B cell (primary cell): ENCODE measurements at regions of chr14 and their contacts with region 1.

Region 1: GRCh38 chr14:102805371-102806246 is 28.4 kb downstream of the TRAF3 start:
- DNase-seq: peak; percentile 61
- ATAC-seq: peak; percentile 55
- H3K4me3 ChIP-seq: peak overlapping the region in 3 of 5 experiments; percentile 0 to 49 (median 13)
- H3K4me3 Mint-ChIP-seq: peak overlapping the region; percentile 89
- H3K27ac ChIP-seq: peak overlapping the region; percentile 82 to 85
- H3K27ac Mint-ChIP-seq: peak overlapping the region; percentile 97
- H3K4me1 ChIP-seq: peaks cover 70 to 77% of the 10 kb centered on the region in 2 donors
- H3K4me1 Mint-ChIP-seq: peaks cover 75% of the 10 kb centered on the region
- H3K27me3 ChIP-seq: no peaks in the 10 kb centered on the region
- H3K27me3 Mint-ChIP-seq: no peaks in the 10 kb centered on the region
- CTCF ChIP-seq: no peak

Region 2: GRCh38 chr14:102768223-102769048 is 37.2 kb before region 1 on chr14:
- CTCF ChIA-PET with region 1: interaction called, 4 read pairs
- POLR2A ChIA-PET with region 1: no interaction called
- intact Hi-C with region 1: loop called (anchors 2 kb)
- DNase-seq: peak; percentile 94
- ATAC-seq: peak; percentile 95
- H3K4me3 ChIP-seq: peak overlapping the region in 1 of 5 experiments; percentile 10
- H3K4me3 Mint-ChIP-seq: peak overlapping the region; percentile 48
- H3K27ac ChIP-seq: peak overlapping the region; percentile 98
- H3K27ac Mint-ChIP-seq: peak overlapping the region; percentile 97
- H3K4me1 ChIP-seq: peaks cover 47 to 71% of the 10 kb centered on the region in 2 donors
- H3K4me1 Mint-ChIP-seq: peaks cover 68% of the 10 kb centered on the region
- H3K27me3 ChIP-seq: no peaks in the 10 kb centered on the region
- H3K27me3 Mint-ChIP-seq: no peaks in the 10 kb centered on the region
- CTCF ChIP-seq: no peak

Region 3: DNA sequence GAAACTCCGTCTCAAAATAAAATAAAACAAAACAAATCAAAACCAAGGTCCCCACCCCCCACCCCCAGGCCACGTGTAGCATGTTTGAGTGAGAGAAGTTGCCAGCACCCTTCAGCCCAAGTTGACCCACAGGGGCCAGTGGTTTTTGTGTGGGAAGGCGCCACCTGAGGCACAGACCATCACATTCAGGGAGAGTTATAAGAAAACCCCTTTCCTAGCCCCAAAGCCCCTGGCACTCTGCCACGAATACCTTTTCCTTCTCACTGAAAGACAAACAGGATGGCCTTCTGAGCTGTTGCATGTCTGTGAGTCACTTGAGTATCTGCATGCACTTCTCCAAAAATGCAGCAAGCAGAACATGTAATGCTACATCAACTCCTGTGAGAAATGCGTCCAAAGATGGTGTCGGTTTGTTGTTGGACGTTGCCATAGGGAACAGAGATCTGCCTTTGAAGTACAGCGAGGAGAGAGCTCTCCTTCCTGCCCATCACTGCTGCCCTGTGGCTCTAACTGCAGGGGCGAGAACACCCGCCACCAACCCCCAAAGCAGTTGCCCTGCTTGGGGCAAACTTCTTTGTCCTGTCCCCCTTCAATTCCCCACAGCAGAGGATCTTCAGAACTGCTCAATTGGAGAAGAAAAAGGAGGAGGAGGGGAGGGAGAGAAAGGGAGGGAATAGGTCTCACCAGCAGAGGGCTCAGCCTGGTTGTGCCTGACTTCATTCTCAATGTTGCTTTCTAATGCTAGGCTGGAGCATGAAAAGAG is 31.0 kb before region 1 on chr14:
- CTCF ChIA-PET with region 1: interaction called, 8 read pairs
- POLR2A ChIA-PET with region 1: interaction called, 4 read pairs
- intact Hi-C with region 1: loop called (anchors 1 kb)
- DNase-seq: peak; percentile 90
- ATAC-seq: peak; percentile 19
- H3K4me3 ChIP-seq: no peak overlapping the region
- H3K4me3 Mint-ChIP-seq: peak overlapping the region; percentile 81
- H3K27ac ChIP-seq: peak overlapping the region; percentile 95 to 97
- H3K27ac Mint-ChIP-seq: peak overlapping the region; percentile 98
- H3K4me1 ChIP-seq: peaks cover 54 to 67% of the 10 kb centered on the region in 2 donors
- H3K4me1 Mint-ChIP-seq: peaks cover 59% of the 10 kb centered on the region
- H3K27me3 ChIP-seq: no peaks in the 10 kb centered on the region
- H3K27me3 Mint-ChIP-seq: no peaks in the 10 kb centered on the region
- CTCF ChIP-seq: peak; percentile 75

Region 4: DNA sequence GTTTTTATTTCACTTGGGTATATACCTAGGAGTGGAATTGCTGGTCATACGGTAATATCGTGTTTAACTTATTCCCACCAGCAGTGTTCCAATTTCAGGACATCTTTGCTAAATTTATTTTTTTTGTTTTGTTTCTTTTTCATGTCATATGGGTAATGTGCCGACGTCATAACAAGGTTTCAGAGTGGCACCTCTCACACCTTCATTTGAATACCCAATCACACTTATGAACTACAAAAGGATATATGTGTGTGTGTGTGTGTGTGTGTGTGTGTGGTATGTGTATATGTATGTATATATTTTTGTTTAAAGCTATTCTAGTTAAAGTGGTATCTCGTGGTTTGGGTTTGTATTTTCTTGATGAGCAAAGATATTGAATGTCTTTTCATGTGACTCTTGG is 16.3 kb before region 1 on chr14:
- CTCF ChIA-PET with region 1: no interaction called
- POLR2A ChIA-PET with region 1: interaction called, 10 read pairs
- intact Hi-C with region 1: loop called (anchors 2 kb)
- DNase-seq: no peak
- ATAC-seq: no peak
- H3K4me3 ChIP-seq: no peak overlapping the region
- H3K4me3 Mint-ChIP-seq: no peak overlapping the region
- H3K27ac ChIP-seq: peak overlapping the region in 1 of 2 donors; percentile 51
- H3K27ac Mint-ChIP-seq: no peak overlapping the region
- H3K4me1 ChIP-seq: peaks cover 50 to 61% of the 10 kb centered on the region in 2 donors
- H3K4me1 Mint-ChIP-seq: peaks cover 76% of the 10 kb centered on the region
- H3K27me3 ChIP-seq: no peaks in the 10 kb centered on the region
- H3K27me3 Mint-ChIP-seq: no peaks in the 10 kb centered on the region
- CTCF ChIP-seq: no peak

Region 5: DNA sequence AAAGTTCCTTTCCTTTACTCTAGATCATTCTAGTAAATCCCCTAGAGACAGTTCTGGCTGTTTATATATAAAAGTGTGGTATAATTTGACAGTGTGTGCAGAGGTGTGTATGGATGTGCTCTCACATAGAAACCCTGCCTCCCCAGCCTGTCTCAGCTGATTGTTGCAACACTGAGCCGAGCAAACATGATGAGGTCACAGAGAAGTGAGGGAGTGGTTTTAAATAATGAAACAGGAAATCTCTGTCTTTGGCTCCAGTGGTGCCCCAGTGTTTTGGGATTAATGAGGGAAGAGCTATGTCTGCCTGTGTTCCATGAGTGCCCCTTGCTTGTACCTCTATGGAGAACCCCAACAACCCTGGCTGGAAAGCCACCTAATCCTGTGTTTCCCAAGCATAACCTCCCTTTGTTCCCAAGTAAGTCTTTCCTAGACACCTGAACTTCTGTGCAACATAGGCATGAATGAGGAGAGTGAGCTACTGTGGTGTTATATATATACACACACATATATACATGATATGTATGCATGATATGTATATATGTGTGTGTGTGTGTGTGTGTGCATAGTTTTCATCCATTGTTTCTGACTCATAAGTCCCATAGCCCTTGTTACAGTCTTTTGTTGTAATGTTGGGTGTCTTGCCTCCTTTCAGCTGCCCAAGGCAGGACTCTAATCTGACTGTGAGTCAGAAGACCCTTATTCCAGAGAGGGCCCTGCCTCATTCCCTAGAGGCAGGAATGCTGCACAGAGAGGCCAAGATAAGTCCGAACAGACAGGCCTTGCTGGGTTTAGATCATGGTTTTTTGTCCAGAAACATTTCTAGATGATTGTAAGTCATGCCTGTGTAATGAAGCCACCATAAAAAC is 10.3 kb before region 1 on chr14:
- CTCF ChIA-PET with region 1: interaction called, 3 read pairs
- POLR2A ChIA-PET with region 1: interaction called, 4 read pairs
- intact Hi-C with region 1: loop called (anchors 2 kb)
- DNase-seq: peak; percentile 64
- ATAC-seq: peak; percentile 73
- H3K4me3 ChIP-seq: no peak overlapping the region
- H3K4me3 Mint-ChIP-seq: peak overlapping the region; percentile 56
- H3K27ac ChIP-seq: peak overlapping the region; percentile 48 to 50
- H3K27ac Mint-ChIP-seq: peak overlapping the region; percentile 86
- H3K4me1 ChIP-seq: peaks cover 53 to 54% of the 10 kb centered on the region in 2 donors
- H3K4me1 Mint-ChIP-seq: peaks cover 79% of the 10 kb centered on the region
- H3K27me3 ChIP-seq: no peaks in the 10 kb centered on the region
- H3K27me3 Mint-ChIP-seq: no peaks in the 10 kb centered on the region
- CTCF ChIP-seq: no peak

Region 6: GRCh38 chr14:102900631-102901571 is 95.3 kb after region 1 on chr14:
- CTCF ChIA-PET with region 1: no interaction called
- POLR2A ChIA-PET with region 1: no interaction called
- intact Hi-C with region 1: loop called (anchors 1 kb)
- DNase-seq: peak; percentile 82
- ATAC-seq: peak; percentile 66
- H3K4me3 ChIP-seq: peak overlapping the region in 4 of 5 experiments; percentile 15 to 45 (median 30)
- H3K4me3 Mint-ChIP-seq: peak overlapping the region; percentile 85
- H3K27ac ChIP-seq: peak overlapping the region; percentile 91 to 93
- H3K27ac Mint-ChIP-seq: peak overlapping the region; percentile 98
- H3K4me1 ChIP-seq: peaks cover 62 to 71% of the 10 kb centered on the region in 2 donors
- H3K4me1 Mint-ChIP-seq: peaks cover 61% of the 10 kb centered on the region
- H3K27me3 ChIP-seq: no peaks in the 10 kb centered on the region
- H3K27me3 Mint-ChIP-seq: no peaks in the 10 kb centered on the region
- CTCF ChIP-seq: no peak